ENCODE measurements at regions of chr3 and their contacts with region 1.

Region 1: DNA sequence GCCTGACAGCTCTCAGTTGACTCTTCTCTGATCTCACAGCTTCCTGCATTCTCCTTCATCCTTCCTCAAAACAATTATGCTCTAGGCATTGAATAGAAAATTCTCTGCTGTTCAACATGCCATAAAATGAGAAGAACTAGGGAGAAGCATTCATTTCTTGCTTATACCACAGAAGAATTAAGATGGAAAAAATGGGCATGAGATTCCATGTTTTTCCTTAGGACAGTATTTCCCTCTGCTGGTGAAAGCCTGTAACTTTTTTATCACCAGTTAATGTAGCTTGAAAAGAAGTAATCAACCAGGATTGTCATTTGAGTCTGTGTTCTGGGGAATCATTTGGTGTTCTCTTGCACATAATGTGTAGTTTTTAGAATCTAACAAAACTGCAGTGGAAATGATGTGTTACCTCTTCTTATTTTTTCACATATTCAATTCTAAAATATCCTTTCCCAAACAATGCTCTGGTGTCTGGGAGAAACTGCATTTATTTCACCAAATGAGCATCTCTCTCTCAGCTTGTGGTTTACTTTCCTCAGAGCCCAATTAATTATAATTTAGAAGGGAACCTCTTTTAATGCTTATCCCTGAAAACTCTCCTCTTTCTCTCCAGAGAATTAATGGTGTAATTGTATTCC is 92.8 kb upstream of the DCBLD2 start:
- DNase-seq: no peak
- H3K4me3 ChIP-seq: no peak overlapping the region
- H3K27ac ChIP-seq: no peak overlapping the region
- H3K4me1 ChIP-seq: no peaks in the 10 kb centered on the region
- H3K27me3 ChIP-seq: no peaks in the 10 kb centered on the region
- CTCF ChIP-seq: peak; percentile 58 to 79 (median 69)
- EP300 ChIP-seq: no peak
- POLR2A ChIP-seq: no peak

Region 2: DNA sequence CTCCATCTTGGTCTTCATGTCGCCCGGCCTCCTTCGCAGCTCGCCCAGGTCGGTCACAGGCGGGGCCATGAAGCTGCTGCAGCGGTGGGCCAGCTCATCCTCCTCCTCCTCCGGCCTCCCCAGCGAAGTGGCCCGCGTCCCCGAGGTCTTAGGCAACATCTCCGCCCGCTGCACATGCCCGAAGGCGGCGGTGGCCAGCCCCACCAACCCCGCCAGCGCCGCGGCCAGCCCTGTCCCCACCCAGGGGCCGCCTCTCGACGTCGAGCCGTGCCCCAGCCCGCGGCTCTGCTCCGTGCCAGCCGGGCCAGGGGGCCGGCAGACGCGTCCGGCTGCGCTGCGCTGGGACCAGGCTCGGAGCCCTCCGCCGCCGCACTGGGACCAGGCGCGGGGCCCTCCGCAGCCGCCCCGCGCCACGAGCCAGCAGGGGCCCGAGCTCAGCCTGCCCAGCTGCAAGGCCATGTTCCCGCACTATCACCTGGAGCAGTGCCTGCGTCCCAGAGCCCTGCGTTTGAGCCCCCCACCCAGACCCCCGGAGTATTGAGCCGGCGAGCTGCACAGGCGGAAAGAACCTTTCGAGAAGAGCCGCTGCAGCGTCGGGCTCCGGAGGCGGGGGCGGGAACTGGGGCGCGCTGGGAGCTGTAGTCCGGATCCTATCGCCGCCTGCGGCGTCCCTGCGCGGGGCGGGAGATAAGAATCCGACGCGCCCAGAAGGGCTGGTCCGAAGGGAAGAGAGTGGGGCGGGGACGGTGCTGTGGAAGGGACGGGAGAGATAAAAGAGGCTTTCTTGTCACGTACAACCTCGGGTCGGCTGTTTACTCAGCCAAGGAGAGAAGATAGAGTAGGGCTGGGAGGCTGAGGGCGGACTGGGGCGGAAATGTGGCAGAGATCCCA is 401.0 kb before region 1 on chr3 and contains the start of gene CPOX:
- intact Hi-C with region 1: loop called (anchors 5 kb)
- DNase-seq: peak; percentile 92
- H3K4me3 ChIP-seq: peak within 1 kb of the TSS; percentile 70 to 87 (median 78)
- H3K27ac ChIP-seq: peak within 1 kb of the TSS; percentile 80 to 85 (median 82)
- H3K4me1 ChIP-seq: peaks cover 0 to 18% (median 14%) of the 10 kb centered on the region in 4 donors
- H3K27me3 ChIP-seq: no peaks in the 10 kb centered on the region
- CTCF ChIP-seq: no peak
- EP300 ChIP-seq: no peak
- POLR2A ChIP-seq: peak in 1 of 2 donors; percentile 17
- total RNA-seq, gene CPOX: 15.3 to 32.7 (median 17.3) TPM

Region 3: DNA sequence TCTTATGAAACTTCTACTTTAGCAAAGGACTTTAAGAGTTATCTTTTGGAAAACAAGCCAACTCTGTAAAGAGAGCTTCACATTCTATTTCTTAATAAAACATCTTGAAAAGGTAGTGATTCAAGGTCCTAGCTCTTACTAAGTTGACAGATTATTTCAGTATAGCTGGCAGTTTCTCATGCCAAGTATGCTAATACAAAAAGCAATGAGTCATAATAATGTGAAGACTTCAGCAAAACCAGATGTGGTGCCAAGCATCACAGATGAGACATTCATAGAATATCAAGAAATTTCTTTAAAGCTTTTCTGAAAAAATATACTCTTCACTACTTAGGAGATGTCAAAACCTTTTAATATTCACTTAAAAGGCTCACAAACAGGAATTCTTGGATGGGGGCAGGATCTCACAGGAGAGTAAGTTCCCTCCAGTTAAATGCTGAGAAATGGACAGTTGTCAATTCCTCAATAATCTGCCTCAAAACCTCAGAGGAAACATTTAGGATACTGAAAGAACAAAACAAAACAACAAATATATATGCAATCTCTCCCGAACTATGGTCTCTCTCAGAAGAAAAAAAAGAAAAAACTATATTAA is 138.3 kb before region 1 on chr3:
- intact Hi-C with region 1: no loop called
- DNase-seq: no peak
- H3K4me3 ChIP-seq: no peak overlapping the region
- H3K27ac ChIP-seq: no peak overlapping the region
- H3K4me1 ChIP-seq: peaks cover 0 to 13% (median 9%) of the 10 kb centered on the region in 4 donors
- H3K27me3 ChIP-seq: no peaks in the 10 kb centered on the region
- CTCF ChIP-seq: no peak
- EP300 ChIP-seq: no peak
- POLR2A ChIP-seq: no peak

Region 4: GRCh38 chr3:98901392-98902350 is 92.6 kb before region 1 on chr3 and contains the start of gene DCBLD2:
- intact Hi-C with region 1: loop called (anchors 2 kb)
- DNase-seq: peak; percentile 99
- H3K4me3 ChIP-seq: peak within 1 kb of the TSS; percentile 93 to 98 (median 96)
- H3K27ac ChIP-seq: peak within 1 kb of the TSS; percentile 96 to 98 (median 96)
- H3K4me1 ChIP-seq: peaks cover 0 to 41% (median 25%) of the 10 kb centered on the region in 4 donors
- H3K27me3 ChIP-seq: no peaks in the 10 kb centered on the region
- CTCF ChIP-seq: no peak
- EP300 ChIP-seq: no peak
- POLR2A ChIP-seq: peak; percentile 45 to 73
- total RNA-seq, gene DCBLD2: 38.8 to 56.5 (median 51.3) TPM

Region 5: DNA sequence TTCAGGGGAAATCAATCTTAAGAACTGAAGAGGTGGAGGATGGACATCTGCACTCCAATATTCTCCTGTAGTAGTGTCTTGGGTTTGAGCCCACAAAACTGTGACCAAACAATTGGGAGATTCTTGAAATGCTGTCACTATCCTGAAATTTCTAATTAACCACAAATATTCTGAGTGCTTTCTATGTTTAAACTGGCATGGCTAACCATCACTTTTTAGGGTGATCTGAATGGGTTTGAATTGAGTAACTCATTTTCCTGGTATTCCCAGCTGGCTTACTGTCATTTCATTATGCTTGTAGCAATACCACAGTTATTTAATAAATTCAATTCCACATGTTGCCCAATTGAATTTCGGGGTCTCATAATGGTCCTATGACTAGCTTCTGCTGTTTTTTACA is 124.1 kb after region 1 on chr3:
- intact Hi-C with region 1: no loop called
- DNase-seq: no peak
- H3K4me3 ChIP-seq: no peak overlapping the region
- H3K27ac ChIP-seq: no peak overlapping the region
- H3K4me1 ChIP-seq: no peaks in the 10 kb centered on the region
- H3K27me3 ChIP-seq: no peaks in the 10 kb centered on the region
- CTCF ChIP-seq: no peak
- EP300 ChIP-seq: no peak
- POLR2A ChIP-seq: no peak

Measured in sigmoid colon (tissue), 7 donors.